OCI-LY7 (cell line): ENCODE measurements at regions of chr9 and their contacts with region 1.

Region 1: DNA sequence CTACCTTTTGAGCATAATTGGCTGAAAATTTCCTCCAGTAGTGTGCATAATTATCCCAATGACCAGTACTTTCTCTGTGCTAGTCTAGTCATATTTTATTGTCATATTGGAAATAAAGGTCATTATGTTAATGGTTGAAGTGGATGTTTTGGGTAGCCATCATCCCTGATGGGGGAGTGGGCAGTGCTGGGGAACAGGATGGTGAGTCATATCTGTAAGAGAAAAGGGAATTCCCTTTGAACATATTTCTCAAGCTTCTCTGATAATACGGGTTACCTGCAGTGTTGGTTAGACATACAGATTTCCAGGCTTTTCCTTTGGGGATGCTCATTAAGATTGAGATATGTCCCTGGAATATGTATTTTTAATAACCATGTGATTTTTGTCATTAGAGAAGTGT is 33.3 kb upstream of the SPATA31D4 start:
- DNase-seq: no peak
- H3K4me3 ChIP-seq: no peak overlapping the region
- H3K27ac ChIP-seq: no peak overlapping the region
- H3K4me1 ChIP-seq: no peaks in the 10 kb centered on the region
- CTCF ChIP-seq: no peak

Region 2: DNA sequence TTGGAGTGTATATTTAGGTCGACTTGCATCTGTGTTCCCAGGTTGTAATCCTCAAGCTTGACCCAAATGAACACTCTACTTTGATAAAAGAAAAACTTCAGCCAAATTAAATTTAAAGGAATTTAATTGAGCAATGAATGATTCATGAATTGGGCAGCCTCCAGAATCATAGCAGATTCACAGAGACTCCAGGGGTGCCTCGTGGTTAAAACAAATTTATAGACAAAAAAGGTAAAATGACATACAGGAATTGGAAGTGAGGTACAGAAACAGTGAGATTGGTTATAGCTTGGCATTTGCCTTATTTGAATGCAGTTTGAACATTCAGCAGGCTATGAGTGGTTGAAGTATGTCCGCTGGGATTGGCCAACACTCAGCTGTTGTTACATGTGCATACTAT is 11.8 kb after region 1 on chr9:
- CTCF ChIA-PET with region 1: no interaction called
- POLR2A ChIA-PET with region 1: interaction called, 4 read pairs
- intact Hi-C with region 1: loop called (anchors 1 kb)
- DNase-seq: no peak
- H3K4me3 ChIP-seq: no peak overlapping the region
- H3K27ac ChIP-seq: no peak overlapping the region
- H3K4me1 ChIP-seq: no peaks in the 10 kb centered on the region
- CTCF ChIP-seq: no peak

Region 3: GRCh38 chr9:81979196-81979595 is 84.3 kb after region 1 on chr9:
- CTCF ChIA-PET with region 1: no interaction called
- POLR2A ChIA-PET with region 1: no interaction called
- intact Hi-C with region 1: loop called (anchors 5 kb)
- DNase-seq: no peak
- H3K4me3 ChIP-seq: no peak overlapping the region
- H3K27ac ChIP-seq: no peak overlapping the region
- H3K4me1 ChIP-seq: no peaks in the 10 kb centered on the region
- CTCF ChIP-seq: no peak

Region 4: GRCh38 chr9:82128011-82128696 is 233.3 kb after region 1 on chr9:
- CTCF ChIA-PET with region 1: no interaction called
- POLR2A ChIA-PET with region 1: no interaction called
- intact Hi-C with region 1: no loop called
- DNase-seq: peak; percentile 95
- H3K4me3 ChIP-seq: peak overlapping the region; percentile 50
- H3K27ac ChIP-seq: peak overlapping the region; percentile 99
- H3K4me1 ChIP-seq: peaks cover 73% of the 10 kb centered on the region
- CTCF ChIP-seq: no peak